A673 (cell line): ENCODE measurements at regions of chrX and their contacts with region 1.

Region 1: DNA sequence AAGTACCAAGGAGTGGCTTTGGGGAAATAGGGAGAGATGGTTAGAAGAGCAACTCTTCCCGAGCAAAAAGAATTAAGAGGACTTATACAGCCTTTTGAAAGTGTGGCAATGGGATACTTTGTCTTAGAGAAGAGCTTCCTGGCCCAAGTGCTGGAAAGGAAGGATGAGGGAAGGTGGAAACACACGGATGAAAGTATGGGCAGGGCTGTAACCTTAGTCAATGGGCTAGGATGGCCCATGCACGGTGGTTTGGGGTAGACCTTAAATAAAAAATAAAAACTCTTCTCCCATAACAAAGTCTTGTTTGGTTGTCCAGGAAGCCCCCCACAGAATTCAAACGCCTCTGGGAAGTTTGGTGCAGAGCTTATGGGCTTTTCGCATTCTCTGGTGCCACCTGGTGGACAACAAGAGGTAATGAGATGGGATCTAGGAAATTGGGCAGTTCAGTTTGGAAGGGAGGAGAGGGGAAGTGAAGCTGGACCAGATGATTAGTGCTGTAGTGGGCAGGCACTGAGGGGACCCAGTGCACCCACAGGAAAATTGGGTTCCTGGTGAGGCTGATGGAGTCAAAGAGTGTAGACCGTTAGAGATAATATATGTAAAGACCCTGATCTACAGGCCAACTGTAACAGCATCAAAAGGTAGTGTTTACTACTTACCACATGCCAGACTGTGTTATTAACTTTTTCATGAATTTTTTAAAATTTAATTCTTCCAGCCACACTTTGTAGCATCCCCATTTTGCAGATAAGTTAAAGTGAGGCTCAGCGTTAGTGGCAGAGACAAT is 13.8 kb upstream of the ENOX2 start:
- DNase-seq: peak; percentile 74
- H3K4me3 ChIP-seq: no peak overlapping the region
- H3K27ac ChIP-seq: no peak overlapping the region
- H3K4me1 ChIP-seq: no peaks in the 10 kb centered on the region
- H3K27me3 ChIP-seq: no peaks in the 10 kb centered on the region
- CTCF ChIP-seq: peak; percentile 81

Region 2: DNA sequence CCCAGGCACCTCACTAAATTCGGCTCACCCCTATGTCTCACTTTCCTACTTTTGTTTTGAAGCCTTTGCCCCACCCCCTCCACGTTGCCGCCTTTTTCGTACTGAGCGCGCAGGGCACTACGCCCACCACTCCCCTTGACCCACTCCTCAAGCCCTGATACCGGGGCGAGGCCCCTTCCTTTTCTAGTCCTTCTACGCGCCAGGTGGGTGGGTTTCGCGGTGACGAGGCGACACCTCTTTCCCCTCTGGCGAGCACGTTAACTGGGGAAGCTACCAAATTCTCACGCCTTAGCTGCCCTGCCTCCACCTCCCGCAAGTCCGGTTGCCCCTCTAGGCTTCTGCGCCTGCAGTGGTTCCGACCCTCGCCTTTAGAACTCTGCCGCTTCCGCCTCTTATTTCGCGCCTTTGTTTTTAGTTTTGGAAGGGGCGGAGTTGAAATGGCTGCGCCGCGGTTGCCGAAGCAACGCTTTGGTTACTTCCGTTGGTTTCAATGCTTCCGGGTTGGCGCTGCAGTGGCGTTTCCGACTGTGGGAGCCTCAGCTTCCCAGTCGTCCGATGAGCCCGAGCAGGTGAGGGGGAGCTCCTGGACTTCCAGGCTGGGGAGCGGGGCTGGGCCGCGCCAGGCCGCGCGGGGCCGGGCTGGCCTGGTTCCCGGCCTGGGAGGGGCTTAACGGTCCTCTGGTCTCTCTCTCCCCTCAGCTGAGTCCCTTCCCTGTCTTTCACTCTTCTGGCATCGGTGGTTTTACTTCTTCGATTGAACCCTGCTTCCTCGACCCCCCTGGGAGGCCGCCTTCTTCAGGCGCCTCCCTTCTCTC is 577.2 kb before region 1 on chrX and contains the start of gene SLC25A14:
- CTCF ChIA-PET with region 1: no interaction called
- POLR2A ChIA-PET with region 1: no interaction called
- intact Hi-C with region 1: loop called (anchors 10 kb)
- DNase-seq: peak; percentile 78
- H3K4me3 ChIP-seq: peak within 1 kb of the TSS; percentile 69
- H3K27ac ChIP-seq: peak within 1 kb of the TSS; percentile 78
- H3K4me1 ChIP-seq: no peaks in the 10 kb centered on the region
- H3K27me3 ChIP-seq: no peaks in the 10 kb centered on the region
- CTCF ChIP-seq: no peak
- total RNA-seq, gene SLC25A14: 19.3 and 21.6 TPM in 2 replicates

Region 3: GRCh38 chrX:130393451-130394074 is 523.3 kb before region 1 on chrX:
- CTCF ChIA-PET with region 1: interaction called, 8 read pairs
- POLR2A ChIA-PET with region 1: no interaction called
- intact Hi-C with region 1: loop called (anchors 2 kb)
- DNase-seq: peak; percentile 60
- H3K4me3 ChIP-seq: no peak overlapping the region
- H3K27ac ChIP-seq: no peak overlapping the region
- H3K4me1 ChIP-seq: no peaks in the 10 kb centered on the region
- H3K27me3 ChIP-seq: peaks cover 4% of the 10 kb centered on the region
- CTCF ChIP-seq: peak; percentile 71

Region 4: DNA sequence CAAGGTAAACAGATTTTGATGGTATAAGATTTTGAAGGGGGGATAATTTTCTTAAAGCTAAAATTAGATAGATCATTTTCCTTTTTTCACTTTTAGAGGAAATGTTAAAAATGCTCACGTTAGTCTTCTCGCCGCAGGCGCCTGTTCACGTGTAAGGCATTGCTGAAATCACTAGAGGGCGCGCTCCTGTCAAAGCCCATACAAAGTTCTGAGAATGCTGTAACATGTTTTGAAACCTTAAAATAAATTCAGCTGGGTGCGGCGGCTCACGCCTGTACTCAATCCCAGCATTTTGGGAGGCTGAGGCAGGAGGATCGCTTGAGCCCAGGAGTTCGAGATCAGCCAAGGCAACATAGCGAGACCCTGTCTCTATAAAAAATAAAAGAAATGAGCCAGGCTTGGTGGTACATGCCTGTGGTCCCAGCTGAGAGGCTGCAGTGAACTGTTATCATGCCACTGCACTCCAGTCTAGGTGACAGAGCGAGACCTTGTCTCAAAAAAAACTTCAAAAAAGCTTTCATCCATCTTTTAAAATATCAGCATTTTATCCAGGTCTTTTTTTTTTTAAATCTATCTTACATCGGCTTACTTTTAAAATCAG is 377.0 kb before region 1 on chrX:
- CTCF ChIA-PET with region 1: interaction called, 10 read pairs
- POLR2A ChIA-PET with region 1: no interaction called
- intact Hi-C with region 1: loop called (anchors 1 kb)
- DNase-seq: peak; percentile 57
- H3K4me3 ChIP-seq: no peak overlapping the region
- H3K27ac ChIP-seq: no peak overlapping the region
- H3K4me1 ChIP-seq: no peaks in the 10 kb centered on the region
- H3K27me3 ChIP-seq: no peaks in the 10 kb centered on the region
- CTCF ChIP-seq: peak; percentile 83

Region 5: GRCh38 chrX:130575831-130576389 is 340.9 kb before region 1 on chrX:
- CTCF ChIA-PET with region 1: interaction called, 14 read pairs
- POLR2A ChIA-PET with region 1: no interaction called
- intact Hi-C with region 1: loop called (anchors 5 kb)
- DNase-seq: peak; percentile 41
- H3K4me3 ChIP-seq: no peak overlapping the region
- H3K27ac ChIP-seq: no peak overlapping the region
- H3K4me1 ChIP-seq: no peaks in the 10 kb centered on the region
- H3K27me3 ChIP-seq: no peaks in the 10 kb centered on the region
- CTCF ChIP-seq: peak; percentile 81

Region 6: GRCh38 chrX:131298846-131299245 is 382.0 kb after region 1 on chrX:
- CTCF ChIA-PET with region 1: no interaction called
- POLR2A ChIA-PET with region 1: no interaction called
- intact Hi-C with region 1: no loop called
- DNase-seq: no peak
- H3K4me3 ChIP-seq: no peak overlapping the region
- H3K27ac ChIP-seq: no peak overlapping the region
- H3K4me1 ChIP-seq: no peaks in the 10 kb centered on the region
- H3K27me3 ChIP-seq: peaks cover 88% of the 10 kb centered on the region
- CTCF ChIP-seq: no peak